Dorsolateral prefrontal cortex (tissue), 120 donors: ENCODE measurements at regions of chrX and their contacts with region 1.

Region 1: GRCh38 chrX:19593690-19594089 is 78.4 kb upstream of the MAP3K15 start:
- DNase-seq: no peak
- H3K4me3 ChIP-seq: no peak overlapping the region
- H3K27ac ChIP-seq: peak overlapping the region in 16 of 59 donors; percentile 3 to 75 (median 51)
- H3K27me3 ChIP-seq: peaks cover 0 to 50% (median 3%) of the 10 kb centered on the region in 45 donors
- CTCF ChIP-seq: peak; percentile 26 to 76 (median 59)

Region 2: GRCh38 chrX:19517965-19518364 is 75.7 kb before region 1 on chrX:
- intact Hi-C with region 1: no loop called
- DNase-seq: no peak
- H3K4me3 ChIP-seq: no peak overlapping the region
- H3K27ac ChIP-seq: no peak overlapping the region
- H3K27me3 ChIP-seq: peaks cover 0 to 78% (median 16%) of the 10 kb centered on the region in 45 donors
- CTCF ChIP-seq: no peak

Region 3: GRCh38 chrX:19659925-19660324 is 66.2 kb after region 1 on chrX:
- intact Hi-C with region 1: loop called in 1 of 2 experiments (anchors 10 kb)
- DNase-seq: no peak
- H3K4me3 ChIP-seq: peak overlapping the region in 1 of 59 donors; percentile 21
- H3K27ac ChIP-seq: peak overlapping the region in 46 of 59 donors; percentile 12 to 89 (median 71)
- H3K27me3 ChIP-seq: peaks cover 0 to 40% (median 5%) of the 10 kb centered on the region in 45 donors
- CTCF ChIP-seq: peak in 19 of 56 donors; percentile 8 to 45 (median 22)